K562 (cell line): ENCODE measurements at regions of chr5 and their contacts with region 1.

Region 1: DNA sequence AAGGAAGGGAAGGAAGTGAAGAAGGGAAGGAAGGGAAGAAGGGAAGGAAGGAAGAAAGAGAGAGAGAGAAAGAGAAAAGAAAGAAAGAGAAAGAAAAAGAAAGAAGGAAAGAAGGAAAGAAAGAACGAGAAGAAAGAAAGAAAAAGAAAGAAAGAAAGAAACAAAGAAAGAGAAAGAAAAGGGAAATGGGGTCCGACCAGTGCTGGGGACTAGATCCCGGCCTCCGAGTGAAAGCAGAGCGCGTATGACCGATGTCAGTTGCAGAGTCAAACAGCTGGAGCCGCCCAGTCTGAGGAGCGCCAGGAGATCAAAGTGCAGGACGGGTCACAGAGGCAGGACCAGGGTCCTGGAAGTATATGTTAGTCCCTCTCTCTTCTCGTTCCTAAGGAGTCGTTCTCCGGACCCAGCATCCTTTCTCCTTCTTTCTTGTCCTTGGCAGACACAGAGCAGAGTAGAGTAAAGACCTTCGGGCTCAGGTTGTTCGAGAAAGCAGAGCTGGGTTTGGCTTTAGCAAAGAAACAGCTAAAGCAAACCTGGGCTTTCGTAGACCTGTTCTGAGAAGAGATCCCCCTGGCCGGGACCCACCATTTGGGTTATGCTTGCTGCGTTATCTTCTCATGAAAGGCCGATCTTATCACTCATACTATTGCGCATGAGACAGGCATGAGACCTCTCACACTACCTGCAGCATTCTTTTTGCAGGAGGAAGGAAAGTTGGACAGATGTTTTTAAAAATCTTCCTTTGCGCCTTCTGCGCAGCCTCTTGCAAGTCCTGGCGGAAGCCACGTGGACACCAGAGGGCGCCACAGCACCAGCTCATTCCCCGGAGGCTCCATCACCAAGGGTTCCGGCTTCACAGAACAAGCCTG is 305.2 kb upstream of the MSX2 start:
- DNase-seq: peak; percentile 72 to 85 (median 76)
- ATAC-seq: peak; percentile 99
- H3K4me3 ChIP-seq: no peak overlapping the region
- H3K27ac ChIP-seq: no peak overlapping the region
- H3K4me1 ChIP-seq: no peaks in the 10 kb centered on the region
- H3K27me3 ChIP-seq: peaks cover 2 to 11% of the 10 kb centered on the region in 2 experiments; a peak in 1 of 5 replicates
- CTCF ChIP-seq: peak; percentile 90 to 95 (median 94)
- EP300 ChIP-seq: no peak
- POLR2A ChIP-seq: no peak
- RAD21 ChIP-seq: peak; percentile 93 to 94

Region 2: GRCh38 chr5:174327317-174328236 is 91.6 kb before region 1 on chr5:
- CTCF ChIA-PET with region 1: no interaction called
- POLR2A ChIA-PET with region 1: no interaction called
- in situ Hi-C with region 1: no loop called
- intact Hi-C with region 1: loop called (anchors 5 kb)
- DNase-seq: peak; percentile 82 to 83 (median 82)
- ATAC-seq: peak; percentile 98
- H3K4me3 ChIP-seq: no peak overlapping the region
- H3K27ac ChIP-seq: no peak overlapping the region
- H3K4me1 ChIP-seq: no peaks in the 10 kb centered on the region
- H3K27me3 ChIP-seq: peaks cover 11 to 50% of the 10 kb centered on the region in 2 experiments; a peak in 3 of 5 replicates
- CTCF ChIP-seq: peak; percentile 89 to 97 (median 96)
- EP300 ChIP-seq: no peak
- POLR2A ChIP-seq: no peak
- RAD21 ChIP-seq: peak; percentile 68 to 81

Region 3: GRCh38 chr5:174735498-174736330 is 316.6 kb after region 1 on chr5:
- CTCF ChIA-PET with region 1: interaction called, 6 read pairs
- POLR2A ChIA-PET with region 1: interaction called, 4 read pairs
- in situ Hi-C with region 1: loop called (anchors 5 kb)
- intact Hi-C with region 1: loop called (anchors 1 kb)
- DNase-seq: peak in 3 of 4 experiments; percentile 17 to 40 (median 27)
- ATAC-seq: peak; percentile 72
- H3K4me3 ChIP-seq: no peak overlapping the region
- H3K27ac ChIP-seq: no peak overlapping the region
- H3K4me1 ChIP-seq: peaks cover 0 to 7% of the 10 kb centered on the region in 2 experiments; a peak in 2 of 5 replicates
- H3K27me3 ChIP-seq: peaks cover 23 to 50% of the 10 kb centered on the region in 2 experiments; a peak in 4 of 5 replicates
- CTCF ChIP-seq: peak; percentile 54 to 60 (median 55)
- EP300 ChIP-seq: no peak
- POLR2A ChIP-seq: no peak
- RAD21 ChIP-seq: peak; percentile 42 to 62

Region 4: GRCh38 chr5:174793684-174794328 is 374.6 kb after region 1 on chr5:
- CTCF ChIA-PET with region 1: interaction called, 14 read pairs
- POLR2A ChIA-PET with region 1: no interaction called
- in situ Hi-C with region 1: loop called (anchors 5 kb)
- intact Hi-C with region 1: loop called (anchors 1 kb)
- DNase-seq: peak; percentile 57 to 65 (median 61)
- ATAC-seq: peak; percentile 96
- H3K4me3 ChIP-seq: no peak overlapping the region
- H3K27ac ChIP-seq: no peak overlapping the region
- H3K4me1 ChIP-seq: peaks cover 0 to 4% of the 10 kb centered on the region in 2 experiments; a peak in 1 of 5 replicates
- H3K27me3 ChIP-seq: peaks cover 0 to 4% of the 10 kb centered on the region in 2 experiments; a peak in 2 of 5 replicates
- CTCF ChIP-seq: peak; percentile 85 to 90 (median 86)
- EP300 ChIP-seq: no peak
- POLR2A ChIP-seq: no peak
- RAD21 ChIP-seq: peak; percentile 82 to 83

Region 5: GRCh38 chr5:174799121-174799520 is 380.0 kb after region 1 on chr5:
- CTCF ChIA-PET with region 1: interaction called, 14 read pairs
- POLR2A ChIA-PET with region 1: no interaction called
- in situ Hi-C with region 1: loop called (anchors 5 kb)
- intact Hi-C with region 1: no loop called
- DNase-seq: no peak
- ATAC-seq: no peak
- H3K4me3 ChIP-seq: no peak overlapping the region
- H3K27ac ChIP-seq: no peak overlapping the region
- H3K4me1 ChIP-seq: no peaks in the 10 kb centered on the region
- H3K27me3 ChIP-seq: peaks cover 0 to 4% of the 10 kb centered on the region in 2 experiments; a peak in 2 of 5 replicates
- CTCF ChIP-seq: no peak
- EP300 ChIP-seq: no peak
- POLR2A ChIP-seq: no peak
- RAD21 ChIP-seq: no peak

Region 6: DNA sequence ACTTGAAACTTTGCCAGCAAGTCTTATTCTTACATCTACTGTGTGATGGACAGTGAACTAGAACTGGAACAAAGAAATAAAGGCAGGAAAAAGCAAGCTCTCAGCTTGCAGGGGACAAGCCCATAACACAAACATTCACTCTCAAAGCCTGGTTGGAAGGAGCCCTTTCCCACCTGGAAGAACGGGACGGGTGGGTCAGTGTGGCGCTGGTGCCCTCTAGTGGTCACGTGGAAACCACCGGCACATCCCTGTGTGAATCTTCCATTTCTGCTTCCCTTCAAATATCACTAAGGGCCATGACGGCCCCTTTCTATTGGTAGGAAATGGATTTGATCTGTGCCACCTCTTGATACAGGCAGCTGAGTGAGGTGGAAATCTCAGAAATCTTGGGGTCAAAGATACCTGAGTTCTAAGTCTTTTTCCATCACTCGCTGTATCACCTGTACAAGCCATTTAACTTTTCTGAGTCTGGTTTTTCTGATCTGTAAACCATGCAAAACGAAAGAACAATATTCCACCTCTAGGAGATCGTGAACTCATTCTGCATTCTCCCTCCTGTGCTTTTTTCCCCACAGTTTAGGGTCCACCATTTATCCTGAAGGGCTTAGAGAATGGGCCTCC is 516.8 kb after region 1 on chr5:
- CTCF ChIA-PET with region 1: no interaction called
- POLR2A ChIA-PET with region 1: no interaction called
- in situ Hi-C with region 1: no loop called
- intact Hi-C with region 1: loop called (anchors 2 kb)
- DNase-seq: peak; percentile 53 to 68 (median 64)
- ATAC-seq: peak; percentile 90
- H3K4me3 ChIP-seq: no peak overlapping the region
- H3K27ac ChIP-seq: no peak overlapping the region
- H3K4me1 ChIP-seq: no peaks in the 10 kb centered on the region
- H3K27me3 ChIP-seq: peaks cover 0 to 12% of the 10 kb centered on the region in 2 experiments; a peak in 2 of 5 replicates
- CTCF ChIP-seq: peak; percentile 79 to 91 (median 85)
- EP300 ChIP-seq: no peak
- POLR2A ChIP-seq: no peak
- RAD21 ChIP-seq: peak; percentile 53 to 85